ENCODE measurements at regions of chr11 and their contacts with region 1.

Region 1: DNA sequence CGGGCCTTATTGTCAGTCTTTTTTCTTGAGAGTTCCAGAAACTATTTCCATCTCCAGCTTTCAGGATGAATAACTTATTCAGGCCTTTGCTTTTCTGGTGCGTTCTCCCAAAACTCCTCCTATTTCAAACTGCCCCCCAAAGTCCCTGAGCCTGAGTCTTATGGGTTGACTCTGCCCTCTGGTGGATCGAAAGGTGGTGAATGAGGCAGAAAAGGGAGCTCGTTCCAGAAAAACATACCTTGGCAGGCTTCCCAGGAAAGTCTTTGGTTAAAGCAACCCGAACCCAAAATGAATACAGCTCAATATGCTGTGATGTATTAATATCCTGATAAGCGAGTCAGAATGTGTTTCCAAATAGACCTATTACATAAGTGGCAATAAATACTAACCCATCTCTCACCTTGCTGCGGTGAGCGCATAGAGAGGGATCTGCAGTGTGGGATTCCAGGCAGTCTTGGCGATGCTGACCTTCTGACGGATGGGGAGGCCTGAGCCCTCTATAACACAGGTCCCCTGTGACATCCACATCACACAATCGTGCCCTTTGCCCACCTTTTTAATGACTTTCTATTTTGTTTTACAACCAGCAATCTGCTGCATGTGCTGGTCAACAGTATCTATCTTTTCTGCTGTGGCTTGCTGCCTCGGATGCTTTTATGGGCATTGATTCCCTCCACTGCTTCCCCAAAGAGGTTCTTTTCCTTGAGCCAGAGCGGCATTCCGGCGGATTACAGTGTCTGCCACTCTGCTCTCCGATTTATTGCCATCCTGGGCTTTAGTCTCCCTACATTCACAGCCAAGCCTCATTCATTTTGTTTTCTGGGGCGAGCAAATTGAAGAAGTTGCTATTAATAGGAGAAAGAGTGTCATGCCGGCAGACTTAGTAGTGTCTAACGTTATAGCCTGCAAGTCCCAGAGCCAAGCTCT is 756.8 kb downstream of the NTM start:
- DNase-seq: peak; percentile 94
- ATAC-seq: peak; percentile 86
- H3K4me3 ChIP-seq: no peak overlapping the region
- H3K27ac ChIP-seq: peak overlapping the region; percentile 86
- H3K4me1 ChIP-seq: peaks cover 11% of the 10 kb centered on the region
- H3K27me3 ChIP-seq: no peaks in the 10 kb centered on the region
- CTCF ChIP-seq: peak; percentile 93
- POLR2A ChIP-seq: 0 out of 2 replicates have a peak, but pooled peaks have one; percentile 34
- RAD21 ChIP-seq: peak; percentile 93

Region 2: DNA sequence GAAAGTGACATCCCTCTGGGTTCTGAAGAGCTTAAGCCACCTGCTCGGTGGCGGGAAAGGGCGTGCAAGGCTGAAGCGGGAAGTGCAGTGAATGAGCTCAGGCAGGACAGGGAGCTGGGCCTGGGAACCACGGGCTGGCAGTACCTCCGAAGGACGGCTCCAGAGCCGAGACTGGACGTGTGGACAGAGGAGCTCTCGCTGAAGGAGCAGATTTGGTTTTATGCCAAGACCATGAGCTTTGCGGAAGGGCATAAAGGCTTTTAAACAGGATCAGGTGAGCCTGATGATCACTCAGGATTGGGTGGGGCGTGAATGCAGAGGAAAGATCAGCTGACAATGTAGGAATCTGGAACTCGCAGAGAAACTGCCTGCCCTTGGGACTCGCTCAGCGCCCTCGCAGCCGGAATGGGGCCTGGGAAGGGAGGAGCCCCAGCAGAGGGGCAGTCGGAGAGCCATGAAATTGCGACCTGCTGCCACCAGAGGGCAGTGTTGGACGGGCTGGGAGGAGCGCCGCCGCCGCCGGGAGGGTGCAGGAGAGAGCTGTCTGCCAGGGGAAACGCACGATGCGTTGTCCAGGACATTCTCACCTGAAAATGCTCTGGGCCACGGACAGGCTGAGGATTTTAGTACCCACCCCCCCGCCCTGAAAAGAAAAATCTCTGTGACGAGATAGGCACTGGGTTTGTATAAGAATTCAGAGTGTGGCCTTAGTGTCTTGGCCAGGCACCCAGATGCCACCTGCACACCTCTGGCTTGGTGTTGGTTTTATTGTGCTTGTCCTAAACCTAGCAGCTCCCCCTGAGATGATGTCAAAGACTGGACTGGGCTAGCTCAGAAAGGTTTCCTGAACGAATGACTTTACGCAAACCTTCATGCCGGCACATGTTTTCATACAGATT is 432.5 kb before region 1 on chr11:
- CTCF ChIA-PET with region 1: interaction called, 4 read pairs
- POLR2A ChIA-PET with region 1: no interaction called
- dilution Hi-C with region 1: no loop called
- in situ Hi-C with region 1: no loop called
- intact Hi-C with region 1: loop called (anchors 1 kb)
- DNase-seq: peak; percentile 69
- ATAC-seq: peak; percentile 99
- H3K4me3 ChIP-seq: no peak overlapping the region
- H3K27ac ChIP-seq: no peak overlapping the region
- H3K4me1 ChIP-seq: 0 out of 2 replicates have a peak, but pooled peaks cover 2% of the 10 kb centered on the region
- H3K27me3 ChIP-seq: no peaks in the 10 kb centered on the region; the same call in 1 of the 2 replicates
- CTCF ChIP-seq: peak; percentile 99
- POLR2A ChIP-seq: no peak
- RAD21 ChIP-seq: peak; percentile 92

Region 3: GRCh38 chr11:131889146-131889577 is 238.1 kb before region 1 on chr11:
- CTCF ChIA-PET with region 1: interaction called, 14 read pairs
- POLR2A ChIA-PET with region 1: no interaction called
- dilution Hi-C with region 1: no loop called
- in situ Hi-C with region 1: no loop called
- intact Hi-C with region 1: no loop called
- DNase-seq: peak; percentile 95
- ATAC-seq: peak; percentile 60
- H3K4me3 ChIP-seq: no peak overlapping the region
- H3K27ac ChIP-seq: peak overlapping the region; percentile 68
- H3K4me1 ChIP-seq: peaks cover 19% of the 10 kb centered on the region
- H3K27me3 ChIP-seq: no peaks in the 10 kb centered on the region
- CTCF ChIP-seq: no peak
- POLR2A ChIP-seq: no peak
- RAD21 ChIP-seq: no peak

Region 4: DNA sequence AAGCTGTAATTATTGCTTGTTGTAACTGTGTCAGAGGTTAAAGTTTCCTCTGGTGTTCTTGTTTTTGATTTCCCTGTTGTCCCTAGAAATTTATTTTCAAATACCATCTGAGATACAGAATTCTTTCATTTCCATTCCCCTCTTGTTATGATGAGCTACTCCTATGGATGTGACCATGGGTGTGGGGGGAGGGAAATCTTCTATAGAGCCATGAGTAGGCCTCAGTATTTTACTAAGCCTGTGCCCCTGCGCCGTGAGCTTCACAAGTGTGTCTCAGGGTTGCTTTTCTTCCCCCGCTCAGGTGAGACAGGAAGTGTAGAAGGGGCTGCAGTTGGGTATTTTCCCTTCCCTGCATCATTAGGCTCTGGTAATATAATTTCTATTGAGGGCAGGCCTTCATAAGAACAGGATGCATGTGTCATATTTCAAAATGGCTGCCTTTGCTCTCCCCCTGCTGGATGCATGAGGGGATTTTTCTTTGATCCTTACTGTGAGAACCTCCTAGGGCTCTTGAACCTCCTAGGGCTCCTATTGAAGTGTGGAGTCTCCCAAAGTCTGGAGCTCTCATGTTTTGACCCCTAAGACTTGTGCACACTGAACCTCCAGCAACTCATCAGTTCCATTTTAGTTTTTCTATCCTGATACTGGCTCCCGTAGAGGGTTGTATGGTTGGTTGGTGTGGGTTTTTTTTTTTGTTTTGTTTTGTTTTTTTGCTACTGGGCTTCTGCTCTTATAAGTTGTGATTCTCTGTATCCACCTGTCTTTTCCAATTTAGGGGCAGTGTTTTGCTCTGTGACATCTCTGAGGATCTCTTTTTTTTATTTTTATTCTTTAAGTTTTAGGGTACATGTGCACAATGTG is 98.6 kb before region 1 on chr11:
- CTCF ChIA-PET with region 1: interaction called, 4 read pairs
- POLR2A ChIA-PET with region 1: no interaction called
- dilution Hi-C with region 1: no loop called
- in situ Hi-C with region 1: no loop called
- intact Hi-C with region 1: loop called (anchors 2 kb)
- DNase-seq: peak; percentile 73
- ATAC-seq: 0 out of 2 replicates have a peak, but pooled peaks have one; percentile 27
- H3K4me3 ChIP-seq: no peak overlapping the region
- H3K27ac ChIP-seq: no peak overlapping the region
- H3K4me1 ChIP-seq: peaks cover 23% of the 10 kb centered on the region
- H3K27me3 ChIP-seq: no peaks in the 10 kb centered on the region
- CTCF ChIP-seq: peak; percentile 61
- POLR2A ChIP-seq: no peak
- RAD21 ChIP-seq: peak; percentile 47

Region 5: GRCh38 chr11:132072044-132072857 is 55.0 kb before region 1 on chr11:
- CTCF ChIA-PET with region 1: interaction called, 8 read pairs
- POLR2A ChIA-PET with region 1: interaction called, 5 read pairs
- dilution Hi-C with region 1: no loop called
- in situ Hi-C with region 1: no loop called
- intact Hi-C with region 1: loop called (anchors 1 kb)
- DNase-seq: peak; percentile 99
- ATAC-seq: peak; percentile 88
- H3K4me3 ChIP-seq: no peak overlapping the region
- H3K27ac ChIP-seq: peak overlapping the region; percentile 91
- H3K4me1 ChIP-seq: peaks cover 29% of the 10 kb centered on the region
- H3K27me3 ChIP-seq: no peaks in the 10 kb centered on the region
- CTCF ChIP-seq: no peak
- POLR2A ChIP-seq: peak; percentile 23; the same call in 1 of the 2 replicates
- RAD21 ChIP-seq: no peak

Region 6: GRCh38 chr11:132245403-132246385 is 118.5 kb after region 1 on chr11:
- CTCF ChIA-PET with region 1: no interaction called
- POLR2A ChIA-PET with region 1: no interaction called
- dilution Hi-C with region 1: no loop called
- in situ Hi-C with region 1: no loop called
- intact Hi-C with region 1: no loop called
- DNase-seq: no peak
- ATAC-seq: no peak
- H3K4me3 ChIP-seq: no peak overlapping the region
- H3K27ac ChIP-seq: no peak overlapping the region
- H3K4me1 ChIP-seq: no peaks in the 10 kb centered on the region
- H3K27me3 ChIP-seq: no peaks in the 10 kb centered on the region
- CTCF ChIP-seq: no peak
- POLR2A ChIP-seq: no peak
- RAD21 ChIP-seq: no peak

Region 7: GRCh38 chr11:132278801-132279574 is 151.8 kb after region 1 on chr11:
- CTCF ChIA-PET with region 1: no interaction called
- POLR2A ChIA-PET with region 1: no interaction called
- dilution Hi-C with region 1: no loop called
- in situ Hi-C with region 1: no loop called
- intact Hi-C with region 1: no loop called
- DNase-seq: peak; percentile 72
- ATAC-seq: peak; percentile 91
- H3K4me3 ChIP-seq: no peak overlapping the region
- H3K27ac ChIP-seq: no peak overlapping the region
- H3K4me1 ChIP-seq: peaks cover 4% of the 10 kb centered on the region
- H3K27me3 ChIP-seq: no peaks in the 10 kb centered on the region
- CTCF ChIP-seq: peak; percentile 50
- POLR2A ChIP-seq: no peak
- RAD21 ChIP-seq: peak; percentile 47

Region 8: DNA sequence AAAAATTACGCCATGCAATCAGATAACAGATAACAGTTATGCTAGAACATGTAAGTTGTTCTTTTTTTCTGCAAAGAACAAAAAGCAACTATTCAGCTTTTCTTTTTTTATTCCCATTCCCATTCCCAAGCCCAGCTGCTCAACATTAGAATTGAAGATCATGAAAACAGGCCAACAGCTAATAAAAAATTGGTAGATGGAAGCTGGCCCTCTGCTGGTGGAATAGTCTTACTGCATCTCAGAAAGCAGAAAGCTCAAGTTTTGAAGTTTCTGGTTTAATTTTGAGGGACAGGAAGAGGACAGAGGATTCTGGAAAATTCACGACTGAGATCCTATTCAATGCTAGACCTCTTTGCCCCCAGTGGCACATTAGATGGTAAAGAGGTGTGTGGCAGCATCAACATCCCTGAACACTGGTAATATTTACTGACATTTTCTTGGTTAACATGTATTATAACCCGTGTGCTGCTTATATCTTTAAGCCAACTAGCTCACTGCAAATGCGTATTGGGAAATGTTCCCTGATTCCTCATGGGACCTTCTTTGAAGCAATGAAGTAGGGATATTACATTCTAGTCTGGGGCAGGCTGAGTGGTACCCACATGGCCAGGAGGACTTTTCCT is 813.9 kb after region 1 on chr11:
- CTCF ChIA-PET with region 1: no interaction called
- POLR2A ChIA-PET with region 1: no interaction called
- dilution Hi-C with region 1: no loop called
- in situ Hi-C with region 1: no loop called
- intact Hi-C with region 1: loop called (anchors 5 kb)
- DNase-seq: peak; percentile 43
- ATAC-seq: peak; percentile 45; the same call in 1 of the 2 replicates
- H3K4me3 ChIP-seq: no peak overlapping the region
- H3K27ac ChIP-seq: no peak overlapping the region
- H3K4me1 ChIP-seq: peaks cover 2% of the 10 kb centered on the region; the same call in 1 of the 2 replicates
- H3K27me3 ChIP-seq: peaks cover 26% of the 10 kb centered on the region
- CTCF ChIP-seq: peak; percentile 81
- POLR2A ChIP-seq: no peak
- RAD21 ChIP-seq: peak; percentile 78